GM13976 (cell line): ENCODE measurements at regions of chr1 and their contacts with region 1.

Region 1: DNA sequence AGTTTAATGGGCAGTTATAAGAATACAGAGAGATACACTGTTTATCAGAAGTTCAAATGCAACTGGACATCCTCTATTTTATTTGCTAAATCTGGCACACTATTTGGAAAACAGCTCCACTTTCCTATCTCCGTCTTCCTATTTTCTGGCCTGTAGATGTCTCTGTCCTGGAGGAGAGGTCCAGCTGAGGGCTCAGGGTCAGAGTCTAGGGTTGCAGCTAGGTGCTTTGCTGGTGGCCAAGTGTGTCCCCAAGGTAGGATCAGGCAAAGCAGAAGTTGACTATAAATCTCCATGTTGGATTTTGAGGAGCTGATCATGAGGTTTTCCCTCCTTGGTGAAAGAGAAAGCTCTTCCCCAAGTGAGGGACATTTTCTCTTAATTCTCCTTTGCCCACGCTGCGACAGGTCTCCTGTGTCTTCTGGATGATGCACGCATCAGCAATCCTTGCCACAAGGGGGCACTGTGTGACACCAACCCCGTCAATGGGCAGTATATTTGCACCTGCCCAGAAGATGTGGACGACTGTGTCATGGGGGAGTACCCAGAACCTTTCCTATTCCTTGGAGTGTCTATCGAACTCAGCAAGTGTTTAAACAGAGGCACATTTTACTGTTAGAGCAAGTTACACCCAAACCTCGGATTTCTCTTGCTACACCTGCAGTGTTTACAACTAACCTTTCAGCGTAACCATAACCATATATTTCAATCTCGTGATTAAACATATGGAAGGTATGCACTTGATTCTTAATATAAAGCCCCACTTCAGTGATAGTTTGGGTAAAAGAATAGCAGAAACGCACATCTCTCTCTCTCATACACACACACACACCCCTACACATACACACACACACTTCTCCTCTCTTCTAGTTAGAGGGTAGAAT is 10.2 kb downstream of the ADAM30 start:
- DNase-seq: peak; percentile 45
- CTCF ChIP-seq: peak; percentile 66

Region 2: GRCh38 chr1:119779869-119780356 is 106.2 kb before region 1 on chr1:
- in situ Hi-C with region 1: loop called (anchors 25 kb)
- DNase-seq: no peak
- CTCF ChIP-seq: no peak

Region 3: GRCh38 chr1:119987112-119987511 is 101.0 kb after region 1 on chr1:
- in situ Hi-C with region 1: no loop called
- DNase-seq: no peak
- CTCF ChIP-seq: no peak